Activated T-helper 2 cell treated with anti-CD3 and anti-CD28 coated beads, Interferon-gamma antibody, Interleukin-2, Interleukin-4, amounts not matched to agents 10 μg/mL and 5 μg/mL and 100 μg/mL, durations not matched to agents 14 hours and 24 hours and 36 hours (primary cell): ENCODE measurements at regions of chr6 and their contacts with region 1.

Region 1: GRCh38 chr6:147765541-147765940 is 257.1 kb downstream of the SAMD5 start:
- DNase-seq: no peak
- H3K4me3 Mint-ChIP-seq: no peak overlapping the region
- H3K27ac Mint-ChIP-seq: no peak overlapping the region
- H3K4me1 Mint-ChIP-seq: no peaks in the 10 kb centered on the region
- H3K27me3 Mint-ChIP-seq: no peaks in the 10 kb centered on the region

Region 2: GRCh38 chr6:147202516-147203312 is 562.8 kb before region 1 on chr6:
- intact Hi-C with region 1: no loop called
- DNase-seq: peak; percentile 79
- H3K4me3 Mint-ChIP-seq: peak overlapping the region; percentile 93
- H3K27ac Mint-ChIP-seq: peak overlapping the region; percentile 99
- H3K4me1 Mint-ChIP-seq: peaks cover 29% of the 10 kb centered on the region
- H3K27me3 Mint-ChIP-seq: no peaks in the 10 kb centered on the region

Region 3: GRCh38 chr6:147750413-147750812 is 15.1 kb before region 1 on chr6:
- intact Hi-C with region 1: loop called (anchors 2 kb)
- DNase-seq: no peak
- H3K4me3 Mint-ChIP-seq: no peak overlapping the region
- H3K27ac Mint-ChIP-seq: no peak overlapping the region
- H3K4me1 Mint-ChIP-seq: no peaks in the 10 kb centered on the region
- H3K27me3 Mint-ChIP-seq: no peaks in the 10 kb centered on the region